AG04450 (cell line): ENCODE measurements at regions of chr5 and their contacts with region 1.

Region 1: GRCh38 chr5:52738095-52738506 is 49.6 kb upstream of the ITGA1 start:
- DNase-seq: no peak
- H3K4me3 ChIP-seq: no peak overlapping the region
- H3K27ac ChIP-seq: no peak overlapping the region
- H3K27me3 ChIP-seq: no peaks in the 10 kb centered on the region
- CTCF ChIP-seq: no peak

Region 2: DNA sequence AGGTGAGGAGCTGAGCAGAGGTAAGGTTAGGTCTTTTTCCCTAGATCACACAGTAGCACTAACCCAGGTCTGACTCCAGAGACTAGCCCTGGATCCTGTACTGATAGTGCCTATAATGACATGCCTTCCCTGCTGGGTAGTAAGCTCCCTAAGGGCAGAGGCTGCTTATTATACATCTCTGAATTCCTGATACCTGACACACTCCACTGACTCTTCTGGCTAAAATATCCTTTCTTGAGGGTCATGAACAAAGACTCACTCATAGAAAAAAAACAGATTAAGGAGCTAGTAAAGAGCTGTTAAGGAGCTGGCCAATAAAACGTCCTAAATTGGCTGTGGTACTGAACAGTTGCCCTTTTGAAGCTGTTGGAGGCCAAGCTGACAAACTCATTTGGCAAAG is 99.4 kb before region 1 on chr5:
- CTCF ChIA-PET with region 1: no interaction called
- POLR2A ChIA-PET with region 1: no interaction called
- DNase-seq: no peak
- H3K4me3 ChIP-seq: no peak overlapping the region
- H3K27ac ChIP-seq: no peak overlapping the region
- H3K27me3 ChIP-seq: no peaks in the 10 kb centered on the region
- CTCF ChIP-seq: no peak

Region 3: DNA sequence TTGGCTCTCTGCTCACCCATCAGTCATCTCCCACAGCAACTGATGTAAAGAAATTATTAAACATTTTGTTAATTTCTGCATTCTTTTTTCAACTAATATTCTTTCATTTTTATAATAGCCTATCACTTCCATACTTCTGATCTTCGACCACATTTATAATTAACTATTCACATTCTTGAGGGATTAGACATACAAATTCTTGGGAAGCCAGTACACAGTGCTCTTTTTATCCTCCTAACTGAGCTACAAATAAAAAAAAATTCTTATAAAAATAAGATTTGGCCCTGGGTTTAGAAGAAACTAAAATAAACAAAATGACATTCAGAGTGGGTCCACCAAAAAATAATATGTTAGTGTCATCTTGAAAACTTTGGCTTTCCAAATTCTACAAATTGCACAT is 54.0 kb before region 1 on chr5:
- CTCF ChIA-PET with region 1: no interaction called
- POLR2A ChIA-PET with region 1: no interaction called
- DNase-seq: no peak
- H3K4me3 ChIP-seq: no peak overlapping the region
- H3K27ac ChIP-seq: no peak overlapping the region
- H3K27me3 ChIP-seq: no peaks in the 10 kb centered on the region
- CTCF ChIP-seq: no peak

Region 4: GRCh38 chr5:52727568-52727967 is 10.5 kb before region 1 on chr5:
- CTCF ChIA-PET with region 1: interaction called, 14 read pairs
- POLR2A ChIA-PET with region 1: no interaction called
- DNase-seq: no peak
- H3K4me3 ChIP-seq: no peak overlapping the region
- H3K27ac ChIP-seq: no peak overlapping the region
- H3K27me3 ChIP-seq: no peaks in the 10 kb centered on the region
- CTCF ChIP-seq: no peak